ENCODE measurements at regions of chr22 and their contacts with region 1.

Region 1: GRCh38 chr22:24938741-24939341 is 7.7 kb downstream of the LHFPL7 start:
- DNase-seq: peak in 1 of 2 experiments; percentile 58
- H3K4me3 ChIP-seq: no peak overlapping the region
- H3K27ac ChIP-seq: no peak overlapping the region
- H3K4me1 ChIP-seq: peaks cover 2 to 6% (median 3%) of the 10 kb centered on the region in 4 experiments; a peak in 4 of 7 replicates
- H3K27me3 ChIP-seq: no peaks in the 10 kb centered on the region
- CTCF ChIP-seq: peak in 2 of 3 experiments; percentile 80 to 81; a peak in 3 of 4 replicates
- EP300 ChIP-seq: no peak
- POLR2A ChIP-seq: no peak
- RAD21 ChIP-seq: peak; percentile 85 to 90

Region 2: GRCh38 chr22:24834845-24835570 is 103.8 kb before region 1 on chr22:
- CTCF ChIA-PET with region 1: no interaction called
- POLR2A ChIA-PET with region 1: no interaction called
- DNase-seq: peak in 1 of 2 experiments; percentile 57
- H3K4me3 ChIP-seq: no peak overlapping the region
- H3K27ac ChIP-seq: no peak overlapping the region; the same call in 1 of the 2 replicates
- H3K4me1 ChIP-seq: peaks cover 9 to 20% (median 15%) of the 10 kb centered on the region in 4 experiments
- H3K27me3 ChIP-seq: no peaks in the 10 kb centered on the region
- CTCF ChIP-seq: peak; percentile 60 to 76 (median 63)
- EP300 ChIP-seq: no peak
- POLR2A ChIP-seq: no peak
- RAD21 ChIP-seq: peak; percentile 36 to 53

Region 3: GRCh38 chr22:24926849-24927579 is 11.8 kb before region 1 on chr22:
- CTCF ChIA-PET with region 1: interaction called, 27 read pairs
- POLR2A ChIA-PET with region 1: interaction called, 4 read pairs
- DNase-seq: no peak
- H3K4me3 ChIP-seq: no peak overlapping the region
- H3K27ac ChIP-seq: no peak overlapping the region
- H3K4me1 ChIP-seq: peaks cover 0 to 8% (median 5%) of the 10 kb centered on the region in 4 experiments; a peak in 4 of 7 replicates
- H3K27me3 ChIP-seq: no peaks in the 10 kb centered on the region
- CTCF ChIP-seq: no peak
- EP300 ChIP-seq: no peak
- POLR2A ChIP-seq: no peak
- RAD21 ChIP-seq: no peak

Region 4: GRCh38 chr22:24985826-24986214 is 47.0 kb after region 1 on chr22:
- CTCF ChIA-PET with region 1: interaction called, 24 read pairs
- POLR2A ChIA-PET with region 1: no interaction called
- DNase-seq: no peak
- H3K4me3 ChIP-seq: no peak overlapping the region
- H3K27ac ChIP-seq: no peak overlapping the region
- H3K4me1 ChIP-seq: peaks cover 0 to 4% (median 1%) of the 10 kb centered on the region in 4 experiments; a peak in 4 of 7 replicates
- H3K27me3 ChIP-seq: no peaks in the 10 kb centered on the region
- CTCF ChIP-seq: no peak
- EP300 ChIP-seq: no peak
- POLR2A ChIP-seq: no peak
- RAD21 ChIP-seq: no peak

Region 5: GRCh38 chr22:25048659-25049647 is 110.1 kb after region 1 on chr22:
- CTCF ChIA-PET with region 1: interaction called, 221 read pairs
- POLR2A ChIA-PET with region 1: no interaction called
- DNase-seq: peak in 1 of 2 experiments; percentile 84
- H3K4me3 ChIP-seq: no peak overlapping the region
- H3K27ac ChIP-seq: no peak overlapping the region
- H3K4me1 ChIP-seq: no peaks in the 10 kb centered on the region
- H3K27me3 ChIP-seq: no peaks in the 10 kb centered on the region
- CTCF ChIP-seq: peak; percentile 90 to 98 (median 91)
- EP300 ChIP-seq: no peak
- POLR2A ChIP-seq: no peak
- RAD21 ChIP-seq: peak; percentile 93 to 94